HCT116 (cell line): ENCODE measurements at regions of chr3 and their contacts with region 1.

Region 1: GRCh38 chr3:132220986-132221385 is 96.2 kb upstream of the ACP3 start:
- DNase-seq: no peak
- ATAC-seq: no peak
- H3K4me3 ChIP-seq: no peak overlapping the region
- H3K27ac ChIP-seq: no peak overlapping the region
- H3K4me1 ChIP-seq: no peaks in the 10 kb centered on the region
- H3K27me3 ChIP-seq: peaks cover 21% of the 10 kb centered on the region
- CTCF ChIP-seq: no peak
- POLR2A ChIP-seq: no peak
- RAD21 ChIP-seq: no peak

Region 2: DNA sequence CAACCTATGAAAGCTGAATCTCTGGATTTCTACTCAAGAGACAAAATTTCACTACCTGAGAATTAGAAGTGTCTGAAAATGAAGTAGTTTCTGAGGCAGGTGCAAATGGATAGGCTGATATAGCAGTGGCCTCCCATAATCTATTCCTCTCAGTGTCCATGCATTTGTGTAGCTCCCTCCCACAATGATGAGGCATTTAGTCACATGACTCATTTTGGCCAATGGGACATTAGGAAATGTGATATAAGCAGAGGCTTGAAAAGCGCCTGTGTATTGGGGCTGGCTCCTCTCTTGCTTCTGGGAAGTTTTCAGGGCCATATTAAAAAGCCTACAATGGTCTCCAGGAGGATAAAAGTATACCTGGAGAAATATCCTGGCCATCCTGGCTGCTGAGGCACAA is 638.5 kb before region 1 on chr3:
- CTCF ChIA-PET with region 1: no interaction called
- POLR2A ChIA-PET with region 1: no interaction called
- RAD21 ChIA-PET with region 1: no interaction called
- intact Hi-C with region 1: no loop called
- DNase-seq: no peak
- ATAC-seq: no peak
- H3K4me3 ChIP-seq: no peak overlapping the region
- H3K27ac ChIP-seq: no peak overlapping the region
- H3K4me1 ChIP-seq: no peaks in the 10 kb centered on the region
- H3K27me3 ChIP-seq: peaks cover 22% of the 10 kb centered on the region
- CTCF ChIP-seq: no peak
- POLR2A ChIP-seq: no peak
- RAD21 ChIP-seq: no peak

Region 3: DNA sequence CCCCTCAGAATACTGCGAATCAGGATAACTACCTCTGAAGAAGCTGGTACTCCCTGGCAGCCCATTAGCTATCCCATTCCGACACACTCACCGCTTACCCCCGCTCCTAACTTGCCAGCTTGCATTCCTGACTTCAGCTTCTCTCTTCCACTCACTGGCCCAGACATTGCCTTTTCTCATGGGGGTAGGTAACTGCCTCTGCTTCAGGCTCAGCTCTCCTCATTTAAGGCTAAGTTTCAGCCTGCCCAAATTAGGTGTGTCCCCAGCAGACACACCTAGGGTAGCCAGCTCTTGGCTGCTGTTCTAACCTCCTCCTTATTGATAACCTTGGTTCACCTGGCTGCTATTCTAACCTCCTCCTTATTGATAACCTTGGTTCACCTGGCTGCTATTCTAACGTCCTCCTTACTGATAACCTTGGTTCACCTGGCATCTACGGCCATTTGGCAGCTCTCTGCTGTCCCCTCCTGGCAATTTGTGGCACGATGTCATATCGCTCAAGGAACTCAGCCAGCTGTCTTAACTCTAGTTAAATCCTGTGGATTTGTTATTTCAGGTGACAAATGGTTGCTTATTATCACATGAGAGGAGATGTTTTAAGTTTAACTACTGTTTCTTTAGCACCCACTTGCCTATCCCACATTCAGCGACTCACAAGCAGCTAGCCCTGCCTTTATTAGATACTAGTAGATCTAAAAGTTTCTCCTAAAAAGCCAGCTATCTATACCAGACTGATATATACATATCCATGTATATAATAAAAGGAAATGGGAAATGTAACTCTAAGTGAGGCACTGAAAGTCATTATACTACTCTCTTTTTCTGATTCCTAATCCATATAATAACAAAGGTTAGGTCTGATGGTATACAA is 10.3 kb before region 1 on chr3:
- CTCF ChIA-PET with region 1: interaction called, 19 read pairs
- POLR2A ChIA-PET with region 1: no interaction called
- RAD21 ChIA-PET with region 1: no interaction called
- intact Hi-C with region 1: no loop called
- DNase-seq: peak; percentile 39
- ATAC-seq: peak; percentile 97
- H3K4me3 ChIP-seq: no peak overlapping the region
- H3K27ac ChIP-seq: no peak overlapping the region
- H3K4me1 ChIP-seq: no peaks in the 10 kb centered on the region
- H3K27me3 ChIP-seq: peaks cover 11% of the 10 kb centered on the region; the same call in 1 of the 2 replicates
- CTCF ChIP-seq: peak; percentile 60 to 85 (median 85); a peak in 5 of 6 replicates
- POLR2A ChIP-seq: no peak
- RAD21 ChIP-seq: peak; percentile 75

Region 4: DNA sequence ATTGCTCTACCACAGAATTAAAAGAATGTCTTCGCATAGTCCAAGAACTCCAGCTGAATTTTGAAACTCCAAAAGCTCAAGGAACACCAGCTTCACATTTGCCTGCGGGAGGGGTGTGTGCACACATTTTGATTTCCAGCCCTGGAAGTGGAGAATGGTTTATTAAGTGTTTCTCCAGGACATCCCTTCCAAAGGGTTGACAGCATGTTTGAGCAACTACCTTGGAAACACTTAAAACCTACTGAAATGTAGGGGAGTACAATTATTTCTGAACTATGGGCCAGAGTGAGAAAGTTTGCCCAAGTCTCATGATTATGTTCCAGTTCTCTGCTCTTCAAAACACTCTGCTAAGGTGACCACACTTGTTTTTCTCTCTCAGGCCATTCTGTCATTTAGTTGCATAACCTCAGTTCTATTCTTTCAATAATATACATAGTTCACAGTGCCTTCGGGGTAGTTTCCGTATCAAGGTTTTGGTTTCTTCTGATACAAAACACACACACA is 104.2 kb after region 1 on chr3:
- CTCF ChIA-PET with region 1: no interaction called
- POLR2A ChIA-PET with region 1: no interaction called
- RAD21 ChIA-PET with region 1: no interaction called
- intact Hi-C with region 1: no loop called
- DNase-seq: no peak
- ATAC-seq: no peak
- H3K4me3 ChIP-seq: no peak overlapping the region
- H3K27ac ChIP-seq: no peak overlapping the region
- H3K4me1 ChIP-seq: no peaks in the 10 kb centered on the region
- H3K27me3 ChIP-seq: peaks cover under 1% of the 10 kb centered on the region; the same call in 1 of the 2 replicates
- CTCF ChIP-seq: no peak
- POLR2A ChIP-seq: no peak
- RAD21 ChIP-seq: no peak

Region 5: GRCh38 chr3:132629928-132630327 is 408.9 kb after region 1 on chr3:
- CTCF ChIA-PET with region 1: no interaction called
- POLR2A ChIA-PET with region 1: no interaction called
- RAD21 ChIA-PET with region 1: no interaction called
- intact Hi-C with region 1: no loop called
- DNase-seq: no peak
- ATAC-seq: no peak
- H3K4me3 ChIP-seq: no peak overlapping the region
- H3K27ac ChIP-seq: no peak overlapping the region
- H3K4me1 ChIP-seq: peaks cover 0 to 15% of the 10 kb centered on the region in 2 experiments; a peak in 2 of 4 replicates
- H3K27me3 ChIP-seq: no peaks in the 10 kb centered on the region
- CTCF ChIP-seq: no peak
- POLR2A ChIP-seq: no peak
- RAD21 ChIP-seq: no peak